ENCODE measurements at regions of chr17 and their contacts with region 1.

Region 1: DNA sequence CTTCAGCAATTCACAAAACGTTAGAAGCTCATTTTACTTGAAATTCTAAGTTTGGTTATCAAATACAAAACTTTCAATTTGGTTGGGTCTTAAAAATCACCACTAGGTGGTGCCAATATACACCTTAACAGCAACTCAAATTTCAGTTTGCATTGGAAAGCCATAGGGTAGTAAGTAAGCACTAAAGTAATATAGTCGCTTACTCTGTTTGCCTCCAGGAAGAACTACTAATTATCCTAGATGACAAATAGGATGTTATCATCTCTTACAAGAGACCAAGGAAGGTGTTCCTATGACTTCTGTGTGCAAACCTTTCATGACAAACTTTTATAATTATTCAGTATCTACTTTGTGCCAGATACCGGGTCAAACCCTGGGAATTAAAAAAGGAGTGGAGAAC is 93.3 kb downstream of the MYO1D start:
- DNase-seq: no peak
- H3K4me3 ChIP-seq: no peak overlapping the region
- H3K27ac ChIP-seq: no peak overlapping the region
- H3K4me1 ChIP-seq: no peaks in the 10 kb centered on the region
- H3K27me3 ChIP-seq: no peaks in the 10 kb centered on the region
- CTCF ChIP-seq: peak in 2 of 3 experiments; percentile 54 to 62; a peak in 2 of 4 replicates
- EP300 ChIP-seq: no peak
- POLR2A ChIP-seq: no peak
- RAD21 ChIP-seq: peak; percentile 82 to 85

Region 2: DNA sequence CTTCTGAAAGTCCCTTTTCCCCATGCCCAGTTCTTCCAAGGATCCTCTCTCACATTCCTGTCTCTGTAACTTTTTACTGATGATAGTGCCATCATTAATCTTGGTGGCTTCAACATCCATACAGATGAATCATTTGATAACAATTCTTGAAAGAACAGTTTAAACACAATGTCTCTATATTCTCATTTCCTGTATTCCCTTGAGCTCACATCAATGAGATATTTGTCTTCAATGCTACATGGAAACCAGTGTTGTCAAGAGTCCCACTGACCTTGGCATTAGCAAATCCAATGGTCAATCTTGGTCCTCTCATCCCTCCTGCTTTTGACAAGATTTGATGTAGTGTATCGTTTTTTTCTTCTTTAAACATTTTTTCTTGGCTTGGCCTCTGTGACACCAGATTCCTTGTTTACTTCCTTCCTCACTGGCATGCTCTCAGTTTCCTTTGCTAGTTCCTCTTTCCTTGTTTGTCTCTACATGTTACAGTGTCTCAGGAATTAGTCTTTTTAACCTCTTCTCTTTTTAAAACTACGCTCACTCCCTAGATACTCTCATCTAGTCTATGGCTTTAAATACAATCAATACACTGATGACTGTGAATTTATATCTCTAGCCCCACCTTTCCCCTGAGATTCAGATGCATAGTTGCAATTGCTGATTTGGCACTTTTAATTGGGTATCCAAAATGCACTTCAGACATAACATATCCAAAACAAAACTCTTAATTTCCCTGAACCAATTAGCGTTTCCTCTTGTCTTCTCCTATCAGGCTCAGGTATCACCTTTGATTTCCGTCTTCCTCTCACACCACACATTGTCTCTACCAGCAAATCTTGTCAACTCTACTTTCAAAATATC is 40.7 kb before region 1 on chr17:
- CTCF ChIA-PET with region 1: no interaction called
- POLR2A ChIA-PET with region 1: no interaction called
- DNase-seq: no peak
- H3K4me3 ChIP-seq: no peak overlapping the region
- H3K27ac ChIP-seq: no peak overlapping the region
- H3K4me1 ChIP-seq: no peaks in the 10 kb centered on the region
- H3K27me3 ChIP-seq: no peaks in the 10 kb centered on the region
- CTCF ChIP-seq: no peak
- EP300 ChIP-seq: no peak
- POLR2A ChIP-seq: no peak
- RAD21 ChIP-seq: no peak

Region 3: DNA sequence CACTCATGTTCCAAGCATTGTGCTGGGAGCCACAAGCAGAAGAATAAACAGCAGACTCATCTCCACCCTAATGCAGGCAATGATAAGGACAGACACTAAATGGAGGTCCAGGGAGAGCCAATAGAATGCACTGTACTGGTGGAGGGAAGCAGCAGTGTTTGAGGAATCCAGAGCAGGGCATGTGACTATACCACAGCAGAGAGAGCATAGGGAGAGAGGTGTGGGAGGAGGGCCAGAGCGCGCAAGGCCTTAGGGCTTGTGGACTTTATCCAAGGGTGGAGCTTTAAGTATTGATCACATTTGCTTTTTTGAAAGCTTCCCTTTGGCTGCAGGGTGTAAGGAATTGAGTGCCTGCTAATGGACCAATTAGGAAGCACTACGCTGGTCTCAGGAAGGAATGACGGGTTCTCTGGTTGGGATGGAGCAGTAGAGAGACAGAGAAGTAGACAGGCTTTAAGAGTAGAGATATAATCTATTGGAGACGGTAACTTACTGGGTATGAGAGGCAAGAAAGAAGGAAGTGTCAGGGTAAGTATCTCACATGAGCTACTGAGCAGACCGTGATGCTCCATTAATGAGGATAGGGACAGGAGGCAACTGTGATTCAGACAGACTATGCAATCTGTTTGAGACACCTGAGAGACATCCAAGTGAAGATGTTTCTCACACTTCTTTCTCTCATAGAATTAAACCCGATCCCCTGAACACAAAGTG is 11.1 kb after region 1 on chr17:
- CTCF ChIA-PET with region 1: interaction called, 24 read pairs
- POLR2A ChIA-PET with region 1: no interaction called
- DNase-seq: no peak
- H3K4me3 ChIP-seq: no peak overlapping the region
- H3K27ac ChIP-seq: no peak overlapping the region
- H3K4me1 ChIP-seq: no peaks in the 10 kb centered on the region
- H3K27me3 ChIP-seq: no peaks in the 10 kb centered on the region
- CTCF ChIP-seq: no peak
- EP300 ChIP-seq: no peak
- POLR2A ChIP-seq: no peak
- RAD21 ChIP-seq: no peak

Region 4: DNA sequence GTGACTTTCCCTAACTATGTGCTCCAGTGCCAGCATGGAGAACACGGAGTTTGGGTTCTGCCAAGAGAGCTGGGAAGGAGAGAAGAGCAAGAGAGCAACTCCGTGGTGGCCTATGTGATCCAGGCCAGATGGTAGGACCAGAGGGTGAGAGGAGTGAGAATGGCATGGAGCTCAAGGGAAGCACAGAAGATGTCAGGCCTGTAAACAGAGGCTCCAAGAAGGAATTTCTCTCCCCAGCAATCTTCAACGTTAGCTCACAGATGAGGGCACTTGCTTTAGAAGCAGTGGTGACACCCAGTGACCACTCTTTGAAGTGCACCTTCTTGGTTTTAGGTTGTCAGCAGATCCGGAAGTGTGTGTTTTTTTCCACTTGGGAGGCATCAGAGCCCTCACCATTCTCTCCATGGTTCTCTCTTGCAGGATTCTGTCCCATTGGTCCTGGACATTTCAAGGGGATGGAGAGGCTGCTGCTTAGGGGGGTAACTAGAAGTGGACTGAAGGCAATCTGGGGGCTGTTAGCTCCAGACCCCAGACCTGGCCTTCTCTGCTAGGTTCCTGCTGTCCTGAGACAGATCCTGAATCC is 126.3 kb after region 1 on chr17:
- CTCF ChIA-PET with region 1: interaction called, 18 read pairs
- POLR2A ChIA-PET with region 1: interaction called, 7 read pairs
- DNase-seq: peak in 1 of 2 experiments; percentile 80
- H3K4me3 ChIP-seq: no peak overlapping the region
- H3K27ac ChIP-seq: no peak overlapping the region
- H3K4me1 ChIP-seq: peaks cover 0 to 3% (median 1%) of the 10 kb centered on the region in 4 experiments; a peak in 2 of 7 replicates
- H3K27me3 ChIP-seq: no peaks in the 10 kb centered on the region
- CTCF ChIP-seq: peak; percentile 40 to 91 (median 70)
- EP300 ChIP-seq: no peak
- POLR2A ChIP-seq: no peak
- RAD21 ChIP-seq: peak; percentile 81 to 89

Region 5: DNA sequence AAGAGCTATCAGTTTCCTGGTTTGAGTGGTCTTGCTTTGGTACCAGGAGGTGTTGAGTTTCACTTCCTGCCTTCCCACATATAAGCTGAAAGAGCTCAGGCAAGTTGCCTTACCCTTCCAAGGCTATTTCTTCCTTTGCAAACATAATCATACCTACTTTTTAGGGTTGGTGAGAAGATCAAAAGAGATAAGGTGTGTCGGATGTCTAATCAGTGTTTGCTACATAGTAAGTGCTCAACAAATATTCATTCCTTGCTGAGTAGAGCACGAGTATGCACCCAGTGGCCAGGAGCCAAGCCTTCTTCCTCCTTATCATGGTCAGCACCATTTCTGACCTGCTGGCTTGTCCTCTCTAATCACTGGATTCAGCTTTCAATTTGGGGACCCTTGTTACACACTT is 131.6 kb after region 1 on chr17:
- CTCF ChIA-PET with region 1: interaction called, 18 read pairs
- POLR2A ChIA-PET with region 1: interaction called, 7 read pairs
- DNase-seq: no peak
- H3K4me3 ChIP-seq: no peak overlapping the region
- H3K27ac ChIP-seq: no peak overlapping the region
- H3K4me1 ChIP-seq: peaks cover 3 to 12% (median 4%) of the 10 kb centered on the region in 4 experiments; a peak in 5 of 7 replicates
- H3K27me3 ChIP-seq: no peaks in the 10 kb centered on the region
- CTCF ChIP-seq: no peak
- EP300 ChIP-seq: no peak
- POLR2A ChIP-seq: no peak
- RAD21 ChIP-seq: no peak

Measured in H1 (cell line).